ENCODE measurements at regions of chr18 and their contacts with region 1.

Region 1: GRCh38 chr18:40159141-40160017 is 1795.7 kb upstream of the PIK3C3 start:
- DNase-seq: no peak
- H3K4me3 ChIP-seq: no peak overlapping the region
- H3K27ac ChIP-seq: no peak overlapping the region
- H3K4me1 ChIP-seq: no peaks in the 10 kb centered on the region
- H3K27me3 ChIP-seq: no peaks in the 10 kb centered on the region
- CTCF ChIP-seq: no peak
- EP300 ChIP-seq: no peak
- POLR2A ChIP-seq: no peak

Region 2: DNA sequence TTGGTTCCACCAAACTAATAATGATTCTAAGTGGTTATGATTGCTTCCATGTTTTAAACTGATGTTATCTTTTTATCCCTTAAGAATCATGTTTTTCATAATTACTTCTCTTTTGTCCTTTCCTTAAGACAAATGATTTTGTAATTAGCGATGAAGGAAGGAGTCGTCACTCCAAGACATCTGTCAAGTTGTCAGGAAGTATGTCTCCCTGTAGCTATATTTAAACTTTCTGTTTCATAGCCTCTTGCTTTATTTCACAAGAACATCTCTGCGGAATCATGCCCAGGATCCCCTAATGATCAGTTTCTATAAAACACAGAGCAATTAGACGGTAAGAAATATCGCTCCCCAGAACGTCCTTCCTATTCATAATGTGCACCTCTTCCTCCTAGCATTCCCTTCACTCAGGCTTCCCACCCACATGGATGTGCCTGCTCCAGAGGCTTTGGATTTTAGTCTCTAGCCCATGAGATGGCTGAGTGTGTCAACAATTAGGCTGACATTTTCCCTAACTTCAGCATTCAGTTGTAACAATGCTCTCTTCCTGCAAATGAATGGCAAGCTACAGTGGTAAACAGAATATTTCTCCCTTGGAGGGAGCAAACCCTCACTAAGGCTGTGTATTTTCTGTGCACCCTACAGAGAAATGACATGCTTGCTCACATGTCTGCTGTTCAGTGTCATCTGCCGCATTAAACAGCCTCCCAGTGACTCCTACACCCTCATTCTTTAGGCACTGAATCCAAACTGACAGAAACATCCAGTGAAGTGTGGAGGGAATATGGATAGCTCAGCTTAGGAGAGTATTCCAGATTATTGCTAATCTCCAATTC is 1714.2 kb before region 1 on chr18:
- intact Hi-C with region 1: loop called in 1 of 4 experiments (anchors 5 kb)
- DNase-seq: no peak
- H3K4me3 ChIP-seq: no peak overlapping the region
- H3K27ac ChIP-seq: no peak overlapping the region
- H3K4me1 ChIP-seq: no peaks in the 10 kb centered on the region
- H3K27me3 ChIP-seq: no peaks in the 10 kb centered on the region
- CTCF ChIP-seq: no peak
- EP300 ChIP-seq: no peak
- POLR2A ChIP-seq: no peak

Region 3: DNA sequence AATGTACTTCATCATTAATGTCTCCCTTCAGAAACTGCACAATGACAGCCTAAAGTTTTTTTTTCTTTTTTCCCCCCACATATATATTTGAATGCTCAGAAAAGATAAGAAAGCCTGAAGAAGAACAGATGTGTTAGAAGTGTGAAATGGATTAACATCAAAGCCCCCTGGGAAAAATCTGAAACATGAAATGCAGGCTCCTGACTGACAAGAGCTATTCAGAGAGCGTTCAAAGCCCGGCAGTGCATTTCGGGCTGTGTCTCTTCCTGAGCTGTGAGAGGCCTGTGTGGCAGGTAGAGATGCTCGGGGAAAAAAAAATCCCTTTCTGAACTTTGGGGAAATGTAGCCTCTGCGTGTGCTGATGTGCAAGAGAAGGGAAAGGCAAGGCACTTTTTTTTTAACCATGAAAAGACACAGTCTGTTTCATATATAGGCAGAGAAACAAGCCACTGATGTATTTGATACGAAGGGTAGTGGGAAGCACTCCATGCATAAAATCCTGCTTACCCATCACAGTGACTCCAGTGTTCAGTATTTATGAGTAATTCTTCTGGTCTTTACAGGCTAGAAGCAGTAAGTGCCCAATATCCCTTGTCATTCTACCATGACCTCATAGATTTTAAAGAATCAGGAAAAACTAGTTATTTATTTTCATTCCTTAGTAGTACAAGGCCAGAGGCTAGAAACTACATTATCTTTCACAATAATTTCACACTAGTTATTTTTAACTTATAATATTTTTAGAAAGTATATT is 221.5 kb after region 1 on chr18:
- intact Hi-C with region 1: no loop called
- DNase-seq: no peak
- H3K4me3 ChIP-seq: no peak overlapping the region
- H3K27ac ChIP-seq: no peak overlapping the region
- H3K4me1 ChIP-seq: no peaks in the 10 kb centered on the region
- H3K27me3 ChIP-seq: no peaks in the 10 kb centered on the region
- CTCF ChIP-seq: no peak
- EP300 ChIP-seq: no peak
- POLR2A ChIP-seq: no peak

Measured in ovary (tissue), 10 donors.